Naive thymus-derived CD4-positive, alpha-beta T cell (primary cell): ENCODE measurements at regions of chr2 and their contacts with region 1.

Region 1: DNA sequence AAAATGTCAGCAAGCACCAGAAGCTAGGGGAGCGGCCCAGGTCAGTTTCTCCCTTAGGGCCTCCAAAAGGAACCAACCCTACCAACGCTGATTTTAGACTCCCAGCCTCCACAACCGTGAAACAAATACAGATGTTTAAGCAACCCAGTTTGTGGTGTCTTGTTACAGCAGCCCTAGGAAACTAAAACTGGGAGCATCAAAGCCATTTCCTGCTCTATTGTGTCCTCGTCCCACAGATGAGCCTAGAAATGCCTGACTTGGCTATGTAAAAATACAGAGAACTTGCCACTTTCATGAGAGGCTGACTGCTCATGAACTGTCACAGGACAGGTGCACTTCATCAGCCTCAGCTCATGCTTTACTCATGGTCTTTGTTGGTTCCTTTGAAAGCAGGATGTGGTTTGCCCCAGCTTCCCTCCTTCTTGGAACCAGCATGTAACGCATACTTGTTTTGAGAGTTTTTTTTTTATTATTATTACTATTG is 97.6 kb upstream of the SLC39A10 start:
- DNase-seq: peak; percentile 14 to 93 (median 90)
- ATAC-seq: peak; percentile 94
- H3K4me3 ChIP-seq: peak overlapping the region; percentile 33
- H3K4me3 Mint-ChIP-seq: peak overlapping the region; percentile 61 to 89 (median 76)
- H3K27ac ChIP-seq: peak overlapping the region; percentile 71
- H3K27ac Mint-ChIP-seq: peak overlapping the region; percentile 84 to 99 (median 94)
- H3K4me1 ChIP-seq: peaks cover 58 to 74% of the 10 kb centered on the region in 2 donors
- H3K4me1 Mint-ChIP-seq: peaks cover 43 to 78% (median 69%) of the 10 kb centered on the region in 7 donors
- H3K27me3 ChIP-seq: no peaks in the 10 kb centered on the region
- H3K27me3 Mint-ChIP-seq: no peaks in the 10 kb centered on the region

Region 2: DNA sequence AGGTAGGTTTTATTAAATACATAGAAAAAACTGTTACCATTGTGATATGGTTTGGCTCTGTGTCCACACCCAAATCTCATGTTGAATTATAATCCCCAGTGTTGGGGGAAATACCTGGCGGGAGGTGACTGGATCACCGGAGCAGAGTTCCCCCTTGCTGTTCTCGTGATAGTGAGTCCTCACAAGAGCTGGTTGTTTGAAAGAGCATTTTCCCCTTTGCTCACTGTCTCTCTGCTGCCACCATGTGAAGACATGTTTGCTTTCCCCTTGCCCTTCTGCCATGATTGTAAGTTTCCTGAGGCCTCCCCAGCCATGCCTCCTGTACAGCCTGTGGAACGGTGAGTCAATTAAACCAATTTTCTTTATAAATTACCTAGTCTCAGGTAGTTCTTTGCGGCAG is 255.2 kb before region 1 on chr2:
- CTCF ChIA-PET with region 1: no interaction called
- POLR2A ChIA-PET with region 1: no interaction called
- intact Hi-C with region 1: no loop called
- DNase-seq: no peak
- ATAC-seq: no peak
- H3K4me3 ChIP-seq: no peak overlapping the region
- H3K4me3 Mint-ChIP-seq: no peak overlapping the region
- H3K27ac ChIP-seq: no peak overlapping the region
- H3K27ac Mint-ChIP-seq: no peak overlapping the region
- H3K4me1 ChIP-seq: no peaks in the 10 kb centered on the region
- H3K4me1 Mint-ChIP-seq: peaks cover 0 to 2% (median 0%) of the 10 kb centered on the region in 7 donors
- H3K27me3 ChIP-seq: no peaks in the 10 kb centered on the region
- H3K27me3 Mint-ChIP-seq: peaks cover 0 to 17% (median 4%) of the 10 kb centered on the region in 5 donors

Region 3: GRCh38 chr2:195486987-195487644 is 72.4 kb before region 1 on chr2:
- CTCF ChIA-PET with region 1: no interaction called
- POLR2A ChIA-PET with region 1: no interaction called
- intact Hi-C with region 1: loop called in 1 of 2 experiments (anchors 1 kb)
- DNase-seq: no peak
- ATAC-seq: peak; percentile 41
- H3K4me3 ChIP-seq: no peak overlapping the region
- H3K4me3 Mint-ChIP-seq: peak overlapping the region in 5 of 10 donors; percentile 3 to 74 (median 28)
- H3K27ac ChIP-seq: no peak overlapping the region
- H3K27ac Mint-ChIP-seq: peak overlapping the region in 2 of 9 donors; percentile 21 to 79
- H3K4me1 ChIP-seq: peaks cover 0 to 6% of the 10 kb centered on the region in 2 donors
- H3K4me1 Mint-ChIP-seq: peaks cover 0 to 43% (median 21%) of the 10 kb centered on the region in 7 donors
- H3K27me3 ChIP-seq: no peaks in the 10 kb centered on the region
- H3K27me3 Mint-ChIP-seq: no peaks in the 10 kb centered on the region

Region 4: DNA sequence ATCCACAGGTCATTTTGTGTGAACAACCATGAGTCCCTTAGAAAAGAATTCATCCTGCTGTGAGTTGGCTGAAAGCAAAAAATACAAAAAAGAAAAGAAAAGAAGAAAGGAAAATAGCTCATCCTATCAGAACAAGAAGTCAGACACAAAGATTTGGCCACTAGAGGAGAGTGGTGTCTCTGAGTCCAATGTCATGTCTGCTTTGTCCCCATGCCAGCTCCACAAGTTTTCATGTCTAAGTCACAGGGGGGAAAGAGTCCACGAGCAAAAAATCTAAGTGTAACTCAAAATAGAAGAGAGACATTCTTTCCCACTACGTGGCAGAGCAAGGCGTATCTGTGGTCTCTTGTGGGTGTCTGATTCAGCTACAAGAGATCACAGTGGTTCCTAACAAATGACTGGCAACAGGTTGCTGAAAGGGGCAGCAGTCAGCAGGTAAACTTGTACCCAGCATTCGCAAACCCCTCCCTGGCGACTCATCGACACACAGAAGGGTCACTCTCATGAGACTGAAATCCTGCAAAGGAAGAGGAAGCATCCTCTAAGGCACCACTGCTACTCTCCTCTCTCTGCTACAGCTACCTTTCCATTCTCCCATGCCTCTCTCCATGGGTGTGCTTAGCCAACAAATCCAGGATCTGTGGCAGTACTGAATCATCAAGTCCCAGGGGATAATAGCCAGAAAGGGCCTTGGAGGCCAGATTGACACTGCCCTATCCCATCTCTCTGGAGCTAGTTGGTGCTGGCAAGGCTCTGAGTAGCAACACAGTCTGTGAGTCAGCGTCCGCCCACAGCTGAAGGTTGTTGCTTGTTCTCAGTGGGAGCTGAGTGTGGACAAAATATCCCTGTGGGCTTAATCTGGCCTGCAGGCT is 25.5 kb before region 1 on chr2:
- CTCF ChIA-PET with region 1: interaction called, 28 read pairs
- POLR2A ChIA-PET with region 1: interaction called, 293 read pairs
- intact Hi-C with region 1: loop called (anchors 1 kb)
- DNase-seq: peak in 8 of 9 donors; percentile 28 to 63 (median 42)
- ATAC-seq: peak; percentile 48
- H3K4me3 ChIP-seq: peak overlapping the region; percentile 51
- H3K4me3 Mint-ChIP-seq: peak overlapping the region; percentile 77 to 95 (median 90)
- H3K27ac ChIP-seq: peak overlapping the region; percentile 77
- H3K27ac Mint-ChIP-seq: peak overlapping the region; percentile 92 to 100 (median 98)
- H3K4me1 ChIP-seq: peaks cover 70 to 73% of the 10 kb centered on the region in 2 donors
- H3K4me1 Mint-ChIP-seq: peaks cover 69 to 90% (median 86%) of the 10 kb centered on the region in 7 donors
- H3K27me3 ChIP-seq: no peaks in the 10 kb centered on the region
- H3K27me3 Mint-ChIP-seq: no peaks in the 10 kb centered on the region

Region 5: DNA sequence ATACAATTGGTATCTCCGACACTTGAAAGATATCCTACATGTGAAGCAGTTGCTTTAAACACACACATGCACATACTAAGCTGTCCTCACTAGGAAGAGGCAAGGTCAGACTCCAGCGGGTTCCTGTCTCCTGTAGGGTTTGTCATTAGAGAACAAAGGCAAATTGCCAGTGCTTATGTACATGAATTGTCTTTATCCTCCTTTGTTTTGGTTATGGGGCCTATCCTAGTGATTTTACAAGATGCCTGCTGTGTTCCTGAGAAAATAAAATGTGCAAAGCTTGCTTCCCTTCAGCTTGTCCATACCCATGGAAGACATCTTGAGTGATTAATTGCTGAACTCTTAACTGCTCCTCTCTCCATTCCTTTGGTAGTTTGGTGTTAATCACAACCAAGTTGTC is 10.9 kb after region 1 on chr2:
- CTCF ChIA-PET with region 1: interaction called, 6 read pairs
- POLR2A ChIA-PET with region 1: interaction called, 26 read pairs
- intact Hi-C with region 1: loop called in 1 of 2 experiments (anchors 1 kb)
- DNase-seq: no peak
- ATAC-seq: no peak
- H3K4me3 ChIP-seq: no peak overlapping the region
- H3K4me3 Mint-ChIP-seq: peak overlapping the region in 2 of 10 donors; percentile 37 to 63
- H3K27ac ChIP-seq: no peak overlapping the region
- H3K27ac Mint-ChIP-seq: peak overlapping the region in 6 of 9 donors; percentile 9 to 85 (median 67)
- H3K4me1 ChIP-seq: peaks cover 0 to 34% of the 10 kb centered on the region in 2 donors
- H3K4me1 Mint-ChIP-seq: peaks cover 18 to 67% (median 60%) of the 10 kb centered on the region in 7 donors
- H3K27me3 ChIP-seq: no peaks in the 10 kb centered on the region
- H3K27me3 Mint-ChIP-seq: no peaks in the 10 kb centered on the region

Region 6: GRCh38 chr2:195594248-195594647 is 34.8 kb after region 1 on chr2:
- CTCF ChIA-PET with region 1: interaction called, 3 read pairs
- POLR2A ChIA-PET with region 1: interaction called, 3 read pairs
- intact Hi-C with region 1: loop called in 1 of 2 experiments (anchors 2 kb)
- DNase-seq: no peak
- ATAC-seq: no peak
- H3K4me3 ChIP-seq: no peak overlapping the region
- H3K4me3 Mint-ChIP-seq: peak overlapping the region in 2 of 10 donors; percentile 12 to 19
- H3K27ac ChIP-seq: no peak overlapping the region
- H3K27ac Mint-ChIP-seq: peak overlapping the region in 3 of 9 donors; percentile 4 to 16 (median 7)
- H3K4me1 ChIP-seq: peaks cover 0 to 7% of the 10 kb centered on the region in 2 donors
- H3K4me1 Mint-ChIP-seq: peaks cover 10 to 40% (median 26%) of the 10 kb centered on the region in 7 donors
- H3K27me3 ChIP-seq: no peaks in the 10 kb centered on the region
- H3K27me3 Mint-ChIP-seq: no peaks in the 10 kb centered on the region